Naive thymus-derived CD4-positive, alpha-beta T cell (primary cell): ENCODE measurements at regions of chr1 and their contacts with region 1.

Region 1: DNA sequence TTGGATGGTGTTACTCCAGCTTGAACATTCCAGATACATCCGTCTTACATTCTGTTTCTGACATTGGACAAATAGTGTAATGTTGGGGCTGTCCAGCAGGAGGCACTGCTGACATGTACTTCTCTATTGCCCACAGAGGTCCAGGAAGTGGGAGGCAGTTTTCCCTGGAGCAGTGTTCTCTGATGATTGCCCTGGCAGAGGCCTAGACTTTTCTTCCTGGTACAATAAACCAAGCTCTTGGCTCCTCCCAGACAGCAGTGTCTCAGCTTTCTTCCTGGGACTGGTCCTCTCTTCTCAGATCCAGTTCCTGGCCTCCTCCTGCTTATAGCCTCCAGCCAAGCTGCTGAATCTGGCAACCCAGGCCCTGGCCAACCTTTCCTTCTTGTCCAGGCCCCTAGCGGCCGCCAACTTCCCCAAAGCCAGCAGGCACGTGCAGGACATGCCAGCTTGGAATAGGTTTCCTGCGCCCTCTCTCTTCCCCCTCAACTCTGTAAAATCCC is 14.9 kb upstream of the IFNLR1 start:
- DNase-seq: peak in 7 of 9 donors; percentile 29 to 54 (median 42)
- ATAC-seq: peak; percentile 53
- H3K4me3 ChIP-seq: no peak overlapping the region
- H3K4me3 Mint-ChIP-seq: no peak overlapping the region
- H3K27ac ChIP-seq: no peak overlapping the region
- H3K27ac Mint-ChIP-seq: no peak overlapping the region
- H3K4me1 ChIP-seq: peaks cover 0 to 4% of the 10 kb centered on the region in 2 donors
- H3K4me1 Mint-ChIP-seq: peaks cover 0 to 16% (median 5%) of the 10 kb centered on the region in 7 donors
- H3K27me3 ChIP-seq: no peaks in the 10 kb centered on the region
- H3K27me3 Mint-ChIP-seq: peaks cover 0 to 5% (median 0%) of the 10 kb centered on the region in 5 donors

Region 2: DNA sequence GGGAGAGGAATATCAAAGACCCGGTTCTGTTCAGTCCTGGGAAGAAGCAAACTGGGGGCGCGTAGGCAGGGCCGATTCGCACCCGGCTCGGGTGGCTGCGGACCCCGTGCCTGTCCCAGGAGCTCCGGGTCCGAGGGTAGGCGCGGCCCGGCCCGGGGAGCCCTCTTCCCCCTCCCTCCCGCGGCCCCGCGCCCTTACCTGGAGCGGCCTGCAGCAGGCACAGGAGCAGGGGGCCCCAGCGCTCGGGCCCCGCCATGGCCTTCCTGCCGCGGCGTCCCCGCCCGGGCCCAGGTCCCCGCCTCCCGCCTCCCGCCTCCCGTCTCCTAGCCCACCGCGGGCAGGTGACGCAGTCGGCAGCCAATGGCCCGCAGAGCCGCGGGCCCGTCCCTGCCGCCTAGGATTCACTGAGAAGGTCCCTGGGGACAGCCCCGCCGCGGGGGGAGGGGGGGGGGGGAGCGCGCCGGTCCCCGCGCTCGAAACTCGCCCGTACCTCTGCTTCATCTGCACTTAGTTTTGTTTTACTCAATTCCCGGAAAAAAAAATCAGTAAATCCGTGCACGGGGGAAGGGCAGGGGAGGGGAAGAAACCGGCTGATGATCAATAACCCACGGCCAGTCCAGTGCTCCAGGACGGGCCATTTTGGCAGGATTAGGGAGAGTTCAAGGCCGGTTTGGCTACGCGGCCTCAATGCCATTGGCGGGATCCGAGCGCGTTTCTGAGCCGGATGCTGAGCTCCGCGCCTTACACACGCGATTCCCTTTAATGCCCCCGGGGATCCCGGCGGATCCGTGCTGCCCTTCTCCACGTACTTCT is 14.8 kb before region 1 on chr1 and contains the start of gene IFNLR1:
- CTCF ChIA-PET with region 1: interaction called, 27 read pairs
- POLR2A ChIA-PET with region 1: interaction called, 3 read pairs
- intact Hi-C with region 1: no loop called
- DNase-seq: peak; percentile 12 to 83 (median 28)
- ATAC-seq: peak; percentile 78
- H3K4me3 ChIP-seq: peak within 1 kb of the TSS; percentile 73
- H3K4me3 Mint-ChIP-seq: peak within 1 kb of the TSS; percentile 79 to 91 (median 85)
- H3K27ac ChIP-seq: peak within 1 kb of the TSS; percentile 65
- H3K27ac Mint-ChIP-seq: peak within 1 kb of the TSS; percentile 34 to 74 (median 63)
- H3K4me1 ChIP-seq: peaks cover 16 to 27% of the 10 kb centered on the region in 2 donors
- H3K4me1 Mint-ChIP-seq: peaks cover 16 to 40% (median 32%) of the 10 kb centered on the region in 7 donors
- H3K27me3 ChIP-seq: no peaks in the 10 kb centered on the region
- H3K27me3 Mint-ChIP-seq: peaks cover 0 to 13% (median 0%) of the 10 kb centered on the region in 5 donors
- total RNA-seq, gene IFNLR1: 1.0 to 3.9 (median 2.6) TPM

Region 3: GRCh38 chr1:24321697-24322469 is 119.9 kb after region 1 on chr1:
- CTCF ChIA-PET with region 1: no interaction called
- POLR2A ChIA-PET with region 1: no interaction called
- intact Hi-C with region 1: loop called (anchors 2 to 5 kb)
- DNase-seq: peak; percentile 34 to 77 (median 65)
- ATAC-seq: peak; percentile 80
- H3K4me3 ChIP-seq: peak overlapping the region; percentile 42
- H3K4me3 Mint-ChIP-seq: peak overlapping the region; percentile 86 to 95 (median 90)
- H3K27ac ChIP-seq: no peak overlapping the region
- H3K27ac Mint-ChIP-seq: peak overlapping the region in 6 of 9 donors; percentile 9 to 81 (median 71)
- H3K4me1 ChIP-seq: peaks cover 22 to 43% of the 10 kb centered on the region in 2 donors
- H3K4me1 Mint-ChIP-seq: peaks cover 36 to 54% (median 47%) of the 10 kb centered on the region in 7 donors
- H3K27me3 ChIP-seq: peaks cover 0 to 11% of the 10 kb centered on the region in 2 donors
- H3K27me3 Mint-ChIP-seq: peaks cover 0 to 96% (median 44%) of the 10 kb centered on the region in 5 donors

Region 4: DNA sequence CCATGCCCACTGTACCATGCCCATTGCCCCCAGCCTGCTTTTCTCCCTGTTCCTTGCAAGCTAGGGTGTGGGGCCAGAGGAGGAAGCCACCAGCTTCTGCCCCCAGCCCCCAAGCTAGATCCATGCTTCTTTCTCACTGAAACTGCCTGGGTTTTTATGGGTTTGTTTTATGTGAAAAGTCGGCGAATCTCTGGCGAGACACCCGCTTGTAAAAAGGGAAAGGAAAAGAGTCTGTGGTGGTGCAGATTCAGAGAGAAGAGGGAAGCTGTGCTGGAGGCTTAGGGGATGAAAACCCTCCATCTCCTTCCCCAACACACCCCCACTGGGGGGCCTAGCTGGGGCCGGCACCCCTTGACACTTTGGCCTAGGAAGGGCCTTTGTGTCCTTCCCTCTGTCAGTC is 143.3 kb after region 1 on chr1:
- CTCF ChIA-PET with region 1: no interaction called
- POLR2A ChIA-PET with region 1: no interaction called
- intact Hi-C with region 1: no loop called
- DNase-seq: no peak
- ATAC-seq: no peak
- H3K4me3 ChIP-seq: no peak overlapping the region
- H3K4me3 Mint-ChIP-seq: no peak overlapping the region
- H3K27ac ChIP-seq: no peak overlapping the region
- H3K27ac Mint-ChIP-seq: no peak overlapping the region
- H3K4me1 ChIP-seq: no peaks in the 10 kb centered on the region
- H3K4me1 Mint-ChIP-seq: peaks cover 0 to 11% (median 5%) of the 10 kb centered on the region in 7 donors
- H3K27me3 ChIP-seq: no peaks in the 10 kb centered on the region
- H3K27me3 Mint-ChIP-seq: peaks cover 0 to 15% (median 0%) of the 10 kb centered on the region in 5 donors

Region 5: GRCh38 chr1:24385160-24385940 is 183.4 kb after region 1 on chr1:
- CTCF ChIA-PET with region 1: interaction called, 253 read pairs
- POLR2A ChIA-PET with region 1: interaction called, 9 read pairs
- intact Hi-C with region 1: no loop called
- DNase-seq: peak in 7 of 9 donors; percentile 9 to 33 (median 24)
- ATAC-seq: peak; percentile 61
- H3K4me3 ChIP-seq: no peak overlapping the region
- H3K4me3 Mint-ChIP-seq: peak overlapping the region in 1 of 10 donors; percentile 50
- H3K27ac ChIP-seq: no peak overlapping the region
- H3K27ac Mint-ChIP-seq: peak overlapping the region in 1 of 9 donors; percentile 90
- H3K4me1 ChIP-seq: no peaks in the 10 kb centered on the region
- H3K4me1 Mint-ChIP-seq: peaks cover 0 to 30% (median 9%) of the 10 kb centered on the region in 7 donors
- H3K27me3 ChIP-seq: no peaks in the 10 kb centered on the region
- H3K27me3 Mint-ChIP-seq: no peaks in the 10 kb centered on the region

Region 6: GRCh38 chr1:24635195-24635843 is 433.3 kb after region 1 on chr1:
- CTCF ChIA-PET with region 1: interaction called, 29 read pairs
- POLR2A ChIA-PET with region 1: no interaction called
- intact Hi-C with region 1: loop called (anchors 1 kb)
- DNase-seq: peak in 7 of 9 donors; percentile 39 to 69 (median 62)
- ATAC-seq: peak; percentile 85
- H3K4me3 ChIP-seq: no peak overlapping the region
- H3K4me3 Mint-ChIP-seq: no peak overlapping the region
- H3K27ac ChIP-seq: no peak overlapping the region
- H3K27ac Mint-ChIP-seq: peak overlapping the region in 5 of 9 donors; percentile 0 to 77 (median 64)
- H3K4me1 ChIP-seq: no peaks in the 10 kb centered on the region
- H3K4me1 Mint-ChIP-seq: peaks cover 2 to 14% (median 8%) of the 10 kb centered on the region in 7 donors
- H3K27me3 ChIP-seq: no peaks in the 10 kb centered on the region
- H3K27me3 Mint-ChIP-seq: peaks cover 4 to 21% (median 8%) of the 10 kb centered on the region in 5 donors

Region 7: DNA sequence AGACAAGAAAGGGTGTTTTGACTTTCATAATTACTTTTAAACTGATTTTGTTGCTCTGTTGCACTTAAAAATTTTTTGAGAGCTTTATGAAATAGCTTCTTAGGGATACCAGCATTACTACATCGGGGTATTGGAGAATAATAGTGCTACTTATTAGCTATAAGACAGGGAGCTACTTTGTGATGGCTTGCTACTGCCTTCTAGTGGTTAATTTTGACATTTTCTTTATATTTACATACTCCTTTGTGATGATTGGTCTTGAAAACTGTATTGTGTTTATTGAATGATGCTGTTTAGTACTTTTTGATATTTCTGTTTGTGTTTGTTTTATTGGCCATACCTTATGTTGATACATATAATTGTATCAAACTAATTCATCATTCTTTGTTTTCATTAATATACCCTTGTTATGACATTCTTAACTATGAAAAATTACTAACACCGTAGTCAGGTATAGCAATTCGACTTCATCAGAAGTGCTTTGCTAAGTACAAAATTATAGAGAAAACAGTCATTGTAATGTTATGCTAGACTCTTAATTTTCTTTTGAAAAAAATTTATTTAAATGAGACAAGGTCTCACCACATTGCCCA is 628.8 kb after region 1 on chr1:
- CTCF ChIA-PET with region 1: interaction called, 28 read pairs
- POLR2A ChIA-PET with region 1: no interaction called
- intact Hi-C with region 1: loop called (anchors 2 to 10 kb)
- DNase-seq: peak in 7 of 9 donors; percentile 17 to 54 (median 48)
- ATAC-seq: peak; percentile 67
- H3K4me3 ChIP-seq: no peak overlapping the region
- H3K4me3 Mint-ChIP-seq: no peak overlapping the region
- H3K27ac ChIP-seq: no peak overlapping the region
- H3K27ac Mint-ChIP-seq: no peak overlapping the region
- H3K4me1 ChIP-seq: no peaks in the 10 kb centered on the region
- H3K4me1 Mint-ChIP-seq: peaks cover 0 to 7% (median 0%) of the 10 kb centered on the region in 7 donors
- H3K27me3 ChIP-seq: no peaks in the 10 kb centered on the region
- H3K27me3 Mint-ChIP-seq: peaks cover 0 to 5% (median 0%) of the 10 kb centered on the region in 5 donors

Region 8: GRCh38 chr1:25217598-25218232 is 1015.7 kb after region 1 on chr1:
- CTCF ChIA-PET with region 1: no interaction called
- POLR2A ChIA-PET with region 1: no interaction called
- intact Hi-C with region 1: no loop called
- DNase-seq: no peak
- ATAC-seq: no peak
- H3K4me3 ChIP-seq: no peak overlapping the region
- H3K4me3 Mint-ChIP-seq: no peak overlapping the region
- H3K27ac ChIP-seq: no peak overlapping the region
- H3K27ac Mint-ChIP-seq: peak overlapping the region in 4 of 9 donors; percentile 21 to 56 (median 47)
- H3K4me1 ChIP-seq: no peaks in the 10 kb centered on the region
- H3K4me1 Mint-ChIP-seq: peaks cover 0 to 11% (median 6%) of the 10 kb centered on the region in 7 donors
- H3K27me3 ChIP-seq: no peaks in the 10 kb centered on the region
- H3K27me3 Mint-ChIP-seq: no peaks in the 10 kb centered on the region